Activated CD4-positive, alpha-beta T cell treated with anti-CD3 and anti-CD28 coated beads for 36 hours (primary cell): ENCODE measurements at regions of chr22 and their contacts with region 1.

Region 1: DNA sequence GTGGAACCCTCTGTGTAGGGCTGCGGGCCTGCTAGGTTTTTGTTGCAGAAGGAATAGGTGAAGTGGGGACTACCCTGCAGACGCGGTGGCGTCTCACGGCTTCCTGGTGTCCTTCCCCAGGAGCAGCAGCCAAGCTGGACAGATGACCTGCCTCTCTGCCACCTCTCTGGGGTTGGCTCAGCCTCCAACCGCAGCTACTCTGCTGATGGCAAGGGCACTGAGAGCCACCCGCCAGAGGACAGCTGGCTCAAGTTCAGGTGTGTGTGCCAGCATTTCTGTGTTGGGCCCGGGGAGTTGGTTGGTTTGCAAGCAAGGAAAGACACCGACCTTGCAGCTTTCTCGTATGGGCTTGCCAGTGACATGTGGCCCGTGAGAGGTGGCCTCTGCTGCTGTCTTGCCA is 15.3 kb downstream of the TAB1 start:
- DNase-seq: no peak
- ATAC-seq: no peak
- H3K4me3 Mint-ChIP-seq: no peak overlapping the region
- H3K27ac Mint-ChIP-seq: no peak overlapping the region
- H3K4me1 Mint-ChIP-seq: peaks cover 57% of the 10 kb centered on the region
- H3K27me3 Mint-ChIP-seq: no peaks in the 10 kb centered on the region

Region 2: GRCh38 chr22:39395936-39396796 is 18.7 kb before region 1 on chr22:
- CTCF ChIA-PET with region 1: interaction called, 8 read pairs
- POLR2A ChIA-PET with region 1: interaction called, 6 read pairs
- intact Hi-C with region 1: loop called in 1 of 2 experiments (anchors 1 kb)
- DNase-seq: no peak
- ATAC-seq: no peak
- H3K4me3 Mint-ChIP-seq: no peak overlapping the region
- H3K27ac Mint-ChIP-seq: no peak overlapping the region
- H3K4me1 Mint-ChIP-seq: peaks cover 9% of the 10 kb centered on the region
- H3K27me3 Mint-ChIP-seq: no peaks in the 10 kb centered on the region